Spleen (tissue), 13 donors: ENCODE measurements at regions of chr11 and their contacts with region 1.

Region 1: GRCh38 chr11:61947486-61948210 is 2.5 kb upstream of the BEST1 start:
- DNase-seq: peak; percentile 92
- H3K4me3 ChIP-seq: no peak overlapping the region
- H3K27ac ChIP-seq: peak overlapping the region in 1 of 8 donors; percentile 5
- H3K4me1 ChIP-seq: peaks cover 4 to 33% (median 16%) of the 10 kb centered on the region in 6 donors
- H3K27me3 ChIP-seq: no peaks in the 10 kb centered on the region
- CTCF ChIP-seq: peak; percentile 79 to 96 (median 89)
- POLR2A ChIP-seq: no peak

Region 2: GRCh38 chr11:61532139-61533038 is 415.3 kb before region 1 on chr11:
- intact Hi-C with region 1: no loop called
- DNase-seq: no peak
- H3K4me3 ChIP-seq: no peak overlapping the region
- H3K27ac ChIP-seq: no peak overlapping the region
- H3K4me1 ChIP-seq: no peaks in the 10 kb centered on the region
- H3K27me3 ChIP-seq: peaks cover 0 to 39% (median 0%) of the 10 kb centered on the region in 7 donors
- CTCF ChIP-seq: peak in 9 of 11 experiments; percentile 46 to 86 (median 71)
- POLR2A ChIP-seq: no peak

Region 3: GRCh38 chr11:61783717-61784519 is 163.7 kb before region 1 on chr11:
- intact Hi-C with region 1: no loop called
- DNase-seq: no peak
- H3K4me3 ChIP-seq: no peak overlapping the region
- H3K27ac ChIP-seq: no peak overlapping the region
- H3K4me1 ChIP-seq: peaks cover 0 to 24% (median 0%) of the 10 kb centered on the region in 6 donors
- H3K27me3 ChIP-seq: no peaks in the 10 kb centered on the region
- CTCF ChIP-seq: no peak
- POLR2A ChIP-seq: no peak

Region 4: GRCh38 chr11:62054484-62055121 is 107.0 kb after region 1 on chr11:
- intact Hi-C with region 1: no loop called
- DNase-seq: peak; percentile 29
- H3K4me3 ChIP-seq: no peak overlapping the region
- H3K27ac ChIP-seq: no peak overlapping the region
- H3K4me1 ChIP-seq: no peaks in the 10 kb centered on the region
- H3K27me3 ChIP-seq: no peaks in the 10 kb centered on the region
- CTCF ChIP-seq: peak in 1 of 11 experiments; percentile 26
- POLR2A ChIP-seq: no peak

Region 5: DNA sequence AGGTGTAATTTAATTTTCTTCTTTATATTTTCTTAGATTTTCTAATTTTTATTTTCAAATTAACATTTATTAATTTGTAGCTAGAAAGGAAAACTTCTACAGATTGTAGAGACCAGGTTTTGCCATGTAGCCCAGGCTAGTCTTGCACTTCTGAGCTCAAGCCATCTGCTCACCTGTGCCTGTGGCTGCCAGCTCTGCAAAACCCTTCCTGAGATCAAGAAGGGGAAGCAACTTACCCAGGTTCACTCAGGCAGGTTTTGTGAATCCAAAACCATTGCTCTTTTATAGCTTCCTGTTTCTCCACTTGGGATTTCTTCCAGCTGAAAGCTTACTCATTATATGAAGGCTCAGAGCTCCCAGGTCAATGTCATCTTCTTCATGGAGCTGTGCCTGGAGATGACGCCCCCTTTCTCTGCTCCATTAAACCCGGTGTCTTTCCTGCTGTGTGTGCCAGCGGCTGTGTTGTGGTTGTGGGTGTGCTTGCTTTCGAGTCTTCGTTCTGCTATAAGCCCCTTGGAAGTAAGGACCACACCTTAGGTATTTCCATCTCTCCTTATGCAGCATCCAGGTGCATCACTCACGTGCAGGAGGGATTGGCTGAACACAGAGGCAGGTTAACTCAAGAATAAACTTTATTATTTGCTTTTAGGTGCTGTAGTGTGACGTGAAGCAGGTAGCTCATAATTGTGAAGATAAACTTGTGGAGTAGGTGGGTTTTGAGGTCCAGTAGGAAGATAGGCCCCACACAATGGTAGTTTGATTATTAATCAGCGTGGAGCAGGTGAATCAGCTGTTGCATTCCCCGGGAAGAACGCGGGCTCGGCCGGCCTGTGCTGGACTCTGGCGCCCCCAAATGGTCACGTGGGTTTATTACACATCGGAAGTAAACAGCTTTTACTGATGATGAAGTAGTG is 134.0 kb after region 1 on chr11:
- intact Hi-C with region 1: loop called (anchors 5 kb)
- DNase-seq: peak; percentile 94
- H3K4me3 ChIP-seq: peak overlapping the region in 1 of 8 donors; percentile 37
- H3K27ac ChIP-seq: peak overlapping the region in 1 of 8 donors; percentile 13
- H3K4me1 ChIP-seq: peaks cover 0 to 13% (median 9%) of the 10 kb centered on the region in 6 donors
- H3K27me3 ChIP-seq: no peaks in the 10 kb centered on the region
- CTCF ChIP-seq: peak; percentile 75 to 91 (median 86)
- POLR2A ChIP-seq: no peak